ENCODE measurements at regions of chr19 and their contacts with region 1.

Region 1: DNA sequence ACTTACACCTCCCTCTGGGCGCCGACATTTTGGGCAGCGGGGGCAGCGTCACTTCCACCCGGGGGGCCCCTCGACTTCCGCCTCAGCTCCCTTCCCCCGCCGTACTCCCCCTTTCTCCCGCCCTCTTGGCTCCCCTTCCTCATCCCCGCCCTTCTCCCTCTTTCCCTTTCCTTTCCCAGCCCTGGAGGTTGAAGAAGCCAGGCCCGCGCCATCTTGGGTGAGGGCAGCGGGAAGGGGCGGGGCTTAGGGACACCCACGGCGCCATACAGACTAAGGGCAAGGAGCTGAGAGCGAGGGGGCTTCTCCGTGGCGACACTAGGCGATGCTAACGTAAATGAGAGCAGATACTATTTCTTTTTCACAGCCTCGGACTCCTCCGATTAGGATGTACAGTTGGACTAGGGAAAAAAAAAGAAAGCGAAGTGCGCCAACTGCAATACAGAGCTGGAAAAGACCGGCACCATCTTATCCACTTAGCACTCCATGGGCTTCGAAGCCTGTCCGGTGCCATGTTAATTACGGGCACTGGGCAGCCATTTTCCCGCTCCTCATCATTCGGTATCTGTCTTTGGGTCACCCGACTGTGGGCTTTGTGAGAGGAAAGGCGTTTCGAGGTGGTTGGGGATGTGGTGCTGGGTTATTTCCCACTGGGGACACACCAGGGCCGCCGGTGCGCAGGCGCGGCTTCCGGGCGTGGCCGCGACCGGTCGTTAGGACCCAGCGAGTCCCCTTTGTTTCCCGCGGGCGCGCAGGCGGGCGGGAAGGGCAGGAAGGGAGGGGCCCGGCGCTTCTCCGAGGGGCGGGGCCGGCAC is at the start of gene FIZ1:
- H3K4me3 ChIP-seq: peak within 1 kb of the TSS; percentile 97
- H3K27ac ChIP-seq: peak within 1 kb of the TSS; percentile 97
- H3K4me1 ChIP-seq: peaks cover 3% of the 10 kb centered on the region; the same call in 1 of the 2 replicates
- CTCF ChIP-seq: no peak; the same call in 1 of the 2 replicates

Region 2: GRCh38 chr19:55476100-55476775 is 123.4 kb before region 1 on chr19 and contains the start of gene ZNF628:
- CTCF ChIA-PET with region 1: no interaction called
- POLR2A ChIA-PET with region 1: interaction called, 17 read pairs
- H3K4me3 ChIP-seq: peak within 1 kb of the TSS; percentile 68
- H3K27ac ChIP-seq: peak within 1 kb of the TSS; percentile 76
- H3K4me1 ChIP-seq: peaks cover 8% of the 10 kb centered on the region; the same call in 1 of the 2 replicates
- CTCF ChIP-seq: no peak

Region 3: GRCh38 chr19:55580628-55581144 is 19.0 kb before region 1 on chr19 and contains the start of gene ZNF579:
- CTCF ChIA-PET with region 1: no interaction called
- POLR2A ChIA-PET with region 1: interaction called, 71 read pairs
- H3K4me3 ChIP-seq: peak within 1 kb of the TSS; percentile 100
- H3K27ac ChIP-seq: peak within 1 kb of the TSS; percentile 80
- H3K4me1 ChIP-seq: 0 out of 2 replicates have a peak, but pooled peaks cover 4% of the 10 kb centered on the region
- CTCF ChIP-seq: no peak

Region 4: DNA sequence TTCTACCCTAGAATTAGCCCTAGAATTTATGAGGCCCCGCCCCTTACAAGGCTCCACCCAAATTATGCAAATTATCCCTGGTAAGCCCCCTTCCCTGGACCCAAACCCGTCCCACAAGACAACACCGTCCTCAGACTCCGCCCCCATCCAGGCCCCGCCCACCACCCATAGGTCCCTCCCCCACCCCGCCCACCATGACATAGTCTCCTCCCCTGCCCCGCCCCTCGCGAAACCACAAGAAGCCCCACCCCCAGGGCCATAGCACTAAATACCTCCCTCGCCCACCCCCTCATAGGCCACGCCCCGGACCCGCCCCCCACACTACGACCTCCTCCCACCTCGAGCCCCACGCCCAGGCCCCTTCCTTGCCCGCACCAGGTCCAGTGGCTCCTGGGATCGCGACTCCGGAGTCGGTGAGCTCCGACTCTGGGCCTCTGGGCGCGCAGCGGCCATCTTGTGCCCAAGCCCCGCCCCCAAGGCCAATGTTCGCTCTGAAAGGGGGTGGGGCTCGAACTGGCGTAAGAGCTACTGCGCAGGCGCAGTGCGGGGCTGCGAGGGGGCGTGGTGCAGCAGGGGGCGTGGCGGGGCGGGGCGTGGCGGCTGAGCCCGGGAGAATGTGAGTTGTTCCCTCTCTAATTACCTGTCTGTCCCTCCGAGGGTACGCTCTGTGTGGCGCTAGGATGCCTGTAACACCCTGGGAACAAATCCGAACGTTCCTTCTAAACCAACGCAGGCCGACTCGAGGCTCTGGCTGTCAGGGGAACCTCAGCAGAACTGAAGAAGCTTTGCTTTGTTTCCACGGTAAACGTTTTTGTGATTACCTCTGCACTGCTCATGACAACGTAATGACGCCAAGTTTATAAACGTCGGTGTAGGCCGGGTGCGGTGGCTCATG is 24.7 kb after region 1 on chr19 and contains the start of gene ZNF784:
- CTCF ChIA-PET with region 1: interaction called, 6 read pairs
- POLR2A ChIA-PET with region 1: interaction called, 75 read pairs
- H3K4me3 ChIP-seq: peak within 1 kb of the TSS; percentile 88
- H3K27ac ChIP-seq: peak within 1 kb of the TSS; percentile 87
- H3K4me1 ChIP-seq: peaks cover 5% of the 10 kb centered on the region
- CTCF ChIP-seq: no peak

Region 5: DNA sequence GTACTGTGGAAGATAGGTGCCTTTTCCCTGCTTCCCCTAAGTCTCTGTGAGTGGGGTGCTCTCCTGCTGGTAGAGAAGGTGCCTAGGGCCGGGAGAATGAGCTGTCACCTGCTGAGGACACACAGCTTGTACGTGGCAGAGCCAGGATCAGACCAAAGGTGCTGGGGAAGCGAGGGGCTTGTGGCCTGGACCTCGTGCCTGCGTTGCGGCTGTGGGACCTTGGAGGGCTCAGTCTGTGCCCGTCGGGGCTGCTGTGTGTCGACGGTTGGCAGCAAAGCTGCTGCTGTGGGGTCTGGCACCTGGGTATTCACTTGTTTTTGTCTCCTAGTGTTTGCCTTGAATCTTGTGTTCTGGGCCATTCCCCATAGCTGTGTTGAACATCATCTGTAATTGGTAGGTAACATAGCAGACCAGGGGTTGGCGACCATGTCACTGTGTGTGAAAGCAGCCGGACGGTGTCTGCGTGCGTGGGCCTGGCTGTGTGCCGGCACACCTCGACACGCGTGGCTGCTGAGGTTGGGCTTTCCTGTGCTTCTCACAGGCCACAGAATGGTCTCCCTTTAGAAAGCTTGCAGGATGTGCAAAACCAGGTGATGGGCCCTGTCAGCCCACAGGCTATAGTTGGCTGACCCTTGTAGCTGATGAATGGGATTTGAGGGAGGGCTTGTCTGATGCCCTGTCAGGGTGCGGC is 64.3 kb after region 1 on chr19:
- CTCF ChIA-PET with region 1: no interaction called
- POLR2A ChIA-PET with region 1: no interaction called
- H3K4me3 ChIP-seq: no peak overlapping the region
- H3K27ac ChIP-seq: no peak overlapping the region
- H3K4me1 ChIP-seq: no peaks in the 10 kb centered on the region; the same call in 1 of the 2 replicates
- CTCF ChIP-seq: no peak

Region 6: GRCh38 chr19:55688422-55689246 is 89.0 kb after region 1 on chr19:
- CTCF ChIA-PET with region 1: no interaction called
- POLR2A ChIA-PET with region 1: no interaction called
- H3K4me3 ChIP-seq: no peak overlapping the region
- H3K27ac ChIP-seq: no peak overlapping the region
- H3K4me1 ChIP-seq: no peaks in the 10 kb centered on the region
- CTCF ChIP-seq: no peak

Region 7: GRCh38 chr19:55809381-55810058 is 209.8 kb after region 1 on chr19:
- CTCF ChIA-PET with region 1: no interaction called
- POLR2A ChIA-PET with region 1: no interaction called
- H3K4me3 ChIP-seq: no peak overlapping the region
- H3K27ac ChIP-seq: no peak overlapping the region
- H3K4me1 ChIP-seq: no peaks in the 10 kb centered on the region
- CTCF ChIP-seq: no peak

Region 8: DNA sequence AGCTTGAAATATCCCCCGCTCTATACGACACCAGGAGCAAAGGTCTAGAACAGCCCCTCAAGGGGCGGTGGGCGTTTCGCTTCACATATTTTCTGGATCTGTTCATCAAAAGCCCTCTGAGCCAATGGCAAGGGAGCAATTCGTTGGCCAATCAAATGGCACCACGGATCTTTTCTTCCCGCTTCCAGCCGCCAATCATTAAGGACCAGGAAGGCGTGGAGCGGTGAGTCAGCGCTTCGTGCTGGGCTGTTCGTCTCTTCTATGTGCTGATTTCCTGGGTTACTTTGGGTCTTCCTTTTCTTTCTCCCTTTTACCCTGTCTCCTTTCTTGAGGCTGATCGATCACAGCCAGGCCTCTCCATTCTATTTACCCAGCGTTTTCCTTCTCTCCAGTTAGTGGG is 236.7 kb after region 1 on chr19 and contains the start of gene NLRP4:
- CTCF ChIA-PET with region 1: no interaction called
- POLR2A ChIA-PET with region 1: no interaction called
- H3K4me3 ChIP-seq: no peak within 1 kb of the TSS
- H3K27ac ChIP-seq: no peak within 1 kb of the TSS
- H3K4me1 ChIP-seq: no peaks in the 10 kb centered on the region
- CTCF ChIP-seq: no peak